ENCODE measurements at regions of chr18 and their contacts with region 1.

Region 1: GRCh38 chr18:31241900-31242409 is 76.0 kb upstream of the DSG1 start:
- DNase-seq: peak; percentile 77 to 81
- H3K4me3 ChIP-seq: no peak overlapping the region
- H3K4me3 Mint-ChIP-seq: peak overlapping the region; percentile 31
- H3K27ac Mint-ChIP-seq: peak overlapping the region; percentile 79
- H3K4me1 ChIP-seq: peaks cover 42% of the 10 kb centered on the region
- H3K4me1 Mint-ChIP-seq: no peaks in the 10 kb centered on the region
- H3K27me3 ChIP-seq: no peaks in the 10 kb centered on the region
- H3K27me3 Mint-ChIP-seq: no peaks in the 10 kb centered on the region
- CTCF ChIP-seq: peak; percentile 60 to 68

Region 2: DNA sequence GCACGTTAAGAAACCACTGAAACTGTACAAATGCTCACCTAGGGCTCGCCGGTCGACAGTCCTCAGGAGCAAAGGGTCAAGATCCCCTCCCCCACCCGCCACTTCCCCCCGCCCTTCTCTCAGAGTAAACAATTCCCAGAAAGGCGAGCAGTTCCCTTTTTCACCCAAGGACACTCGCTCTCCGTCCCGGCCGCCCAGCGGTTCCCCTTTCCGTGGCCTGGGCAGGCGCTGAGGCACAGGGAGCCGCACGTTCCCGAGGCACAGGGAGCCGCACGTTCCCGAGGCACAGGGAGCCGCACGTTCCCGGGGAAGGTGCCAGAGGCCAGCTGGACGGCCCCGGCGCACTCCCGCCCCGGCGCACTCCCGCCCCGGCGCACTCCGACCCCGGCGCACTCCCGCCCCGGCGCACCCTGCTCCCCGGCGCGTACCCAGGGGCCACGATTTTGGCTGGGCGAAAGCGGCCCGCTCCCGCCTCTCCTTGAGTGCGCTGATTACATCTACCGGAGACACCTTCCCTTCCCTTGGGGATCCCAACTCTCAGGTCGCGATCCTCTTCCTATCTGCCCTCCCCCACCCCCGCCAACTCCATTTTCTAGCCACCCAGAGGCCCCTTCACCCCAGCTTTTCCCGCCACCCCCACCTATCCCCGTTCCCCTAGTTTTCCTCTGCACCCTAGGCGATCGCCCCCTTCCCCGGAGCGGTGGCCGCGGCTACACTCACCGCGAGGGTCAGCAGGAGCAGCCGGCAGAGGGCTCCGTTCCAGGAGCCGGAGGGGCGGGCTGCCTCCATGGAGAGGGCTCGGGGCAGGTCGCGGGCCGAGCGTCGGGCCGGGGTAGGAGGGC is 140.6 kb before region 1 on chr18:
- CTCF ChIA-PET with region 1: no interaction called
- POLR2A ChIA-PET with region 1: no interaction called
- intact Hi-C with region 1: loop called (anchors 1 kb)
- DNase-seq: peak; percentile 61 to 67
- H3K4me3 ChIP-seq: peak overlapping the region; percentile 69
- H3K4me3 Mint-ChIP-seq: peak overlapping the region; percentile 83
- H3K27ac Mint-ChIP-seq: peak overlapping the region; percentile 86
- H3K4me1 ChIP-seq: no peaks in the 10 kb centered on the region
- H3K4me1 Mint-ChIP-seq: peaks cover 17% of the 10 kb centered on the region
- H3K27me3 ChIP-seq: no peaks in the 10 kb centered on the region
- H3K27me3 Mint-ChIP-seq: no peaks in the 10 kb centered on the region
- CTCF ChIP-seq: peak in 1 of 2 experiments; percentile 25

Region 3: GRCh38 chr18:31225668-31226067 is 16.3 kb before region 1 on chr18:
- CTCF ChIA-PET with region 1: no interaction called
- POLR2A ChIA-PET with region 1: no interaction called
- intact Hi-C with region 1: loop called (anchors 1 kb)
- DNase-seq: peak; percentile 56 to 63
- H3K4me3 ChIP-seq: no peak overlapping the region
- H3K4me3 Mint-ChIP-seq: no peak overlapping the region
- H3K27ac Mint-ChIP-seq: peak overlapping the region; percentile 57
- H3K4me1 ChIP-seq: peaks cover 9% of the 10 kb centered on the region
- H3K4me1 Mint-ChIP-seq: peaks cover 18% of the 10 kb centered on the region
- H3K27me3 ChIP-seq: no peaks in the 10 kb centered on the region
- H3K27me3 Mint-ChIP-seq: no peaks in the 10 kb centered on the region
- CTCF ChIP-seq: no peak

Region 4: DNA sequence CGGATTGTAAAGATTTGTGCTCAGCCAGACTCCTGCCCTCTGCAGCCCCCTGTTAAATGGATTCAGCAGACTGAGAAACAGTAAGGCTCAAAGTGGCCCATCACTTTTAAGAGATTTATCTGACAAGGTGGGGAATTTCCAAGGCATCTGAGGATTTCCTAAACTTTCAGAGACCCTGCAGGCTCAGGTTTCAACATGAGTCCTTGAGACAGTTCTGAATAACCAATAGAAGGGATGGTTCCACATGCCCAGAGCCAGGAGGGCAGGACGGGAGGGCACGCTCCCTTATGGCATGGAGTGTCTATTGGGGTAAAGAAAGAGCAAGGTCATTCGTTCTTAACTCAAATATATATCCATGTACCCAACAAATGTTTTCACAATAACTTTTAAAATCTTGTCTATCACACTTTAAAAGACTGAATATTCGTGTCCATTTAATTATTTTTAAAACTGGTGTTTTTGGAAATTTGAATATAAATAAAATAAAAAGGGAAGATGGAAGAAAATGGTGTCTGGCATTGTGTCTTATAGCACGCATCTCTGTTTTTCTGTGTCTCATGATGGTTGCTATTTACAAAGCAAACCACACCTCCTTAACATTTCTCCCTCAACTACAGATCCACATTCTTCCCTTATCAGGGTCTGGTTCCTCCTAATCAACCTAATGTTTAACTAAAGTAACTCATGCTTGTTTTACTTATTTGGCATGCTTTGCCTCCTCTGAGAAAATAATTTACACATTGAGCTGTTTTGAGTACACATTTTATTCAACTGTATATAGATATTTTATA is 20.0 kb after region 1 on chr18:
- CTCF ChIA-PET with region 1: no interaction called
- POLR2A ChIA-PET with region 1: no interaction called
- intact Hi-C with region 1: loop called (anchors 2 kb)
- DNase-seq: peak in 1 of 2 experiments; percentile 56
- H3K4me3 ChIP-seq: no peak overlapping the region
- H3K4me3 Mint-ChIP-seq: no peak overlapping the region
- H3K27ac Mint-ChIP-seq: peak overlapping the region; percentile 84
- H3K4me1 ChIP-seq: peaks cover 21% of the 10 kb centered on the region
- H3K4me1 Mint-ChIP-seq: peaks cover 5% of the 10 kb centered on the region
- H3K27me3 ChIP-seq: no peaks in the 10 kb centered on the region
- H3K27me3 Mint-ChIP-seq: no peaks in the 10 kb centered on the region
- CTCF ChIP-seq: no peak

Region 5: DNA sequence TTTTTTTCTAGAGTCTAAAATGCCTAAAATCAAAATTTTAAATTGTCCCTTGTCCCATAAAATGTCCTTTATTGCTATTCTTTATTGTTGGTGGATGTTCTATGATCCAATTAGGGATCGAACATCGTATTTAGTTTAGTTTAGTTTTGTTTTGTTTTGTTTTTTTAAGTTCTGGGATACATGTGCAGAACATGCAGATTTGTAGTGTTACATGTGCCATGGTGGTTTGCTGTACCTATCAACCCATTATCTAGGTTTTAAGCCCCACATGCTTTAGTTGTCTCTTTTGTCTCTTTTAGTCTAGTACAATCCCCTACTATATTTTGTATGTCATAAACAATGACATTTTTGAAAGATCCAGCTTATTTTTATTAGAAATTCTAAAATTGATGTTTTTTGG is 67.2 kb after region 1 on chr18:
- CTCF ChIA-PET with region 1: no interaction called
- POLR2A ChIA-PET with region 1: no interaction called
- intact Hi-C with region 1: no loop called
- DNase-seq: no peak
- H3K4me3 ChIP-seq: no peak overlapping the region
- H3K4me3 Mint-ChIP-seq: no peak overlapping the region
- H3K27ac Mint-ChIP-seq: no peak overlapping the region
- H3K4me1 ChIP-seq: no peaks in the 10 kb centered on the region
- H3K4me1 Mint-ChIP-seq: peaks cover 9% of the 10 kb centered on the region
- H3K27me3 ChIP-seq: no peaks in the 10 kb centered on the region
- H3K27me3 Mint-ChIP-seq: peaks cover 3% of the 10 kb centered on the region
- CTCF ChIP-seq: no peak

Region 6: DNA sequence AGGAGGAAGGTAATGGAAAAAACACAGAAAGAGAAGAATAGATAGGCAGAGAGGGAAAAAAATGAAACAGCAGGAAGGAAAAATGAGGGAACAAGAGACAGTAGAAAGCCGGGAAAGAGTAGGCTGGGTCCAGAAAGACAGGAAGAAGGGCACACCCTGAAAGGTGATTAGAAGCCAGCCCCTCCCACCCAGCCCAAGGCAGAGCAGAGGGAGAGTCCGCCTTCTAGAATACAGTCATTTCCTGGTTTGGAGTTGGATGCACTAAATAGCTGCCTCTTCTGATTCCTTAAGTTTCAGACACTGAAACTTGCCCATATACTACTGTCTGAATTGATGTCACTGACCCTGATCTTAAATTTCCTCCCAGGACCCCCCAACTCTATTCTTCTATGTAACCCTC is 187.7 kb after region 1 on chr18:
- CTCF ChIA-PET with region 1: no interaction called
- POLR2A ChIA-PET with region 1: no interaction called
- intact Hi-C with region 1: no loop called
- DNase-seq: peak in 1 of 2 experiments; percentile 29
- H3K4me3 ChIP-seq: no peak overlapping the region
- H3K4me3 Mint-ChIP-seq: no peak overlapping the region
- H3K27ac Mint-ChIP-seq: no peak overlapping the region
- H3K4me1 ChIP-seq: peaks cover 10% of the 10 kb centered on the region; the same call in 1 of the 2 replicates
- H3K4me1 Mint-ChIP-seq: peaks cover 7% of the 10 kb centered on the region
- H3K27me3 ChIP-seq: no peaks in the 10 kb centered on the region
- H3K27me3 Mint-ChIP-seq: no peaks in the 10 kb centered on the region
- CTCF ChIP-seq: no peak

Region 7: GRCh38 chr18:32092422-32093101 is 850.6 kb after region 1 on chr18:
- CTCF ChIA-PET with region 1: no interaction called
- POLR2A ChIA-PET with region 1: no interaction called
- intact Hi-C with region 1: loop called (anchors 5 kb)
- DNase-seq: peak; percentile 94 to 95
- H3K4me3 ChIP-seq: peak overlapping the region; percentile 76
- H3K4me3 Mint-ChIP-seq: peak overlapping the region; percentile 92
- H3K27ac Mint-ChIP-seq: peak overlapping the region; percentile 94
- H3K4me1 ChIP-seq: no peaks in the 10 kb centered on the region
- H3K4me1 Mint-ChIP-seq: peaks cover 10% of the 10 kb centered on the region
- H3K27me3 ChIP-seq: no peaks in the 10 kb centered on the region
- H3K27me3 Mint-ChIP-seq: no peaks in the 10 kb centered on the region
- CTCF ChIP-seq: no peak

Measured in Caco-2 (cell line).